ENCODE measurements at regions of chrX and their contacts with region 1.

Region 1: GRCh38 chrX:24144528-24144927 is 5.0 kb upstream of the ZFX start:
- DNase-seq: no peak
- ATAC-seq: no peak
- H3K4me3 ChIP-seq: no peak overlapping the region
- H3K27ac ChIP-seq: peak overlapping the region; percentile 92
- H3K4me1 ChIP-seq: peaks cover 19% of the 10 kb centered on the region; the same call in 1 of the 2 replicates
- H3K27me3 ChIP-seq: no peaks in the 10 kb centered on the region
- CTCF ChIP-seq: no peak

Region 2: DNA sequence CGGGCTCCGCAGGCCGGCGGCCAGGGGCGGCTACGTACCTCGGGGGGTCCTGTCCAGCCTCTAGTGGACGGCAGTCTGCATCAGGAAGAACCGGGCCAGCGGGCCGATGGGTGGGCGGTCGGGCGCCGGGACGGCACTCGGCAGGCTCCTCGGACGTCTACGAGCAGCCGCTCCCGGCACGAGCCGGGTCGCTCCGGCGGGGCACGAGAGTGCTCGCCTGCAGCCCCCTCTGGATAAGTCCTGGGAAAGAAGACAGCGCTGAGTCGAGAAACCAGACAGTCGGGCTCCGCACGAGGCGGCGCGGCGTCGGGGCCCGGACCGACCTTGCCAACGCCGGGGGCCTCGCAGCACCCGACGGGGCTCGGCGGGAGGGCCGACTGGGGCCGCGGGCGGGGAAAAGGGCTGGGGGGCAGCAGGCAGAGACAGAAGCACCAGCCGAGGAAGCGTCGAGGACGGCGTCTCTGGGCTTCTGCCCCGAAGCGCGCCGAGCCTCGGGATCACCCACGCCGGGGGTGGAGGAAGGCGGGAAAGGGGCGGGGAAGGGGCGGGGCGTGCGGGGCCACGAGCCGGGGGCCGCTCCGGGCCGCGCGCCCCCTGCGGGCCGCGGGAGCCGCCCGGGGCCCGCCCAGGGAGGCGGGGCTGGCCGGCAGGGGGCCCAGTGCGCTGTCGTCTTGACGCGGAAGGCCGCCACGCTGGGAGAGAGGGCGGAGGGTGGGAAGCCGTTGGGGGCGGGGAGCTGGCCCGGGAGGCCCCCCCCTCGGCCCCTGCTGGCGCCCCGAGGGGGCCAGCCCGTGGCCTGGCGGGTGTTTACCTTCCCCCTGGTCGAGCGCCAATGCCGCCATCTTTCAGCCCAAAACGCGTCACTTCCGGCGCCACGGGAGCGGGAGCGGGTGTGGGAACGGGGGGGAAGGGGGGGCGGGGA is 119.4 kb before region 1 on chrX:
- CTCF ChIA-PET with region 1: no interaction called
- POLR2A ChIA-PET with region 1: interaction called, 15 read pairs
- in situ Hi-C with region 1: no loop called
- intact Hi-C with region 1: no loop called
- DNase-seq: no peak
- ATAC-seq: peak; percentile 96
- H3K4me3 ChIP-seq: peak overlapping the region; percentile 70 to 75
- H3K27ac ChIP-seq: peak overlapping the region; percentile 82; the same call in 1 of the 2 replicates
- H3K4me1 ChIP-seq: no peaks in the 10 kb centered on the region
- H3K27me3 ChIP-seq: no peaks in the 10 kb centered on the region
- CTCF ChIP-seq: peak; percentile 66

Region 3: GRCh38 chrX:24294620-24295019 is 150.1 kb after region 1 on chrX:
- CTCF ChIA-PET with region 1: no interaction called
- POLR2A ChIA-PET with region 1: no interaction called
- in situ Hi-C with region 1: no loop called
- intact Hi-C with region 1: no loop called
- DNase-seq: no peak
- ATAC-seq: no peak
- H3K4me3 ChIP-seq: no peak overlapping the region
- H3K27ac ChIP-seq: no peak overlapping the region
- H3K4me1 ChIP-seq: no peaks in the 10 kb centered on the region
- H3K27me3 ChIP-seq: no peaks in the 10 kb centered on the region
- CTCF ChIP-seq: peak; percentile 42

Region 4: DNA sequence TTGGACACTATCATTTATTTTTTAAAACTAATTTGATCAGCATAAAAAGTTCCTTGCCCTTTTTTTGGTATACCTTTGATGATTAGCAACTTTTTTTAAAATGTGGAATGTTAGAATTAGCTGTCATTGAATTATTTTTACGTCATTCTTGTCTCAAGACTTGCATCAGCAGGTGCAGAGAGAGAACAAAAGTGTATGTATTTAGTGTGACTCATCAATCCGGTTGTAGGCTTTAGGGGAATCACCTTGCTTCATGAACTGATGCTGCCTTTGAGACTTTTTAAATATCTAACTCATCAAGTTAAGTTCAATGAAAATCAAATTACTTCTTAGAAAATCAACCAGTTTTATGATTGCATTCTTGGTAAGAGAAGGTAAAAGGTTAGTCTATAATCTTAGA is 746.1 kb after region 1 on chrX:
- CTCF ChIA-PET with region 1: no interaction called
- POLR2A ChIA-PET with region 1: no interaction called
- in situ Hi-C with region 1: no loop called
- intact Hi-C with region 1: no loop called
- DNase-seq: no peak
- ATAC-seq: no peak
- H3K4me3 ChIP-seq: no peak overlapping the region
- H3K27ac ChIP-seq: no peak overlapping the region
- H3K4me1 ChIP-seq: no peaks in the 10 kb centered on the region
- H3K27me3 ChIP-seq: no peaks in the 10 kb centered on the region
- CTCF ChIP-seq: no peak